Activated T-helper 1 cell treated with anti-CD3 and anti-CD28 coated beads, Interleukin-12 subunit alpha, Interleukin-12 subunit beta, Interleukin-2, Interleukin-4 antibody, amounts not matched to agents 30 ng/mL and 10 ng/mL and 1 ng/mL, durations not matched to agents 14 hours and 24 hours and 36 hours (primary cell): ENCODE measurements at regions of chr12 and their contacts with region 1.

Region 1: GRCh38 chr12:49763006-49763591 is 21.7 kb downstream of the TMBIM6 start:
- DNase-seq: peak; percentile 61
- H3K4me3 Mint-ChIP-seq: peak overlapping the region; percentile 61
- H3K27ac Mint-ChIP-seq: peak overlapping the region; percentile 75
- H3K4me1 Mint-ChIP-seq: peaks cover 49% of the 10 kb centered on the region
- H3K27me3 Mint-ChIP-seq: peaks cover 3% of the 10 kb centered on the region

Region 2: DNA sequence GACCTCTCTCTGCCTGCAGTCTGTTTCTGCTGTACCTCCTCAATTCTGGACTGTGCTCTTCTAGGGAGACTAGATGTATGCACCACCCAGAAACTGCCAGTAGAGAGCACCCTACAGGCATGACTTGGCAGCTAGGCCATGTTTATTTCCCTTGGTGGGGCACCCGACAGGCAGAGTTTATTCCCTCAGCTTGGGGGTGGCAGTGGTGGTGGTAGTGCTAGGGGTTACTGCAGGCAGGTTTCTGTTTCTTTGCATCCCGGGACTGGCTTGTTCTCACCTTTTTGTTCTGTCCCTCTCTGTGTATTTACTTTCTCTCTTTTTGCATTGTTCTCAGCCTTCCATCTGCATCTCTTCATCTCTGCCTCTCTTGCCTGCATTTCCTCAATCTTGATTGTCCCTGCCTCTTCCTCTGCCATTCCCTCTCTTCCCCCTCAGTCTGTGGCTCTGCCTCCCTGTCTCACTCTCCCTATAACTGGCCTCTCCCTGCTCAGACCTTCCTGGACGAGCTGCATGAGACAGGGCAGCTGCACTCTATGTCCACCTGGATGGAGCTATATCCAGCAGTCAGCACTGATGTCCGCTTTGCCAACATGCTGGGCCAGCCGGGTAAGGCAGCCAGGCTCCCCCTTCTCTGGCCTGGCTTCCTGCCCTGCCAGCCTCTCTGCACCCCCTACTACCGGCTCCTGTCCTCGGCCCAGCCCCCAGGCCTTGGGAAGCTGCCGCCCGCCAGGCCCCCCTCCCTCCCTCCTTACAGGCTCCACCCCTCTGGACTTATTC is 125.9 kb before region 1 on chr12:
- intact Hi-C with region 1: loop called (anchors 5 kb)
- DNase-seq: peak; percentile 54
- H3K4me3 Mint-ChIP-seq: no peak overlapping the region
- H3K27ac Mint-ChIP-seq: peak overlapping the region; percentile 24
- H3K4me1 Mint-ChIP-seq: peaks cover 11% of the 10 kb centered on the region
- H3K27me3 Mint-ChIP-seq: no peaks in the 10 kb centered on the region

Region 3: DNA sequence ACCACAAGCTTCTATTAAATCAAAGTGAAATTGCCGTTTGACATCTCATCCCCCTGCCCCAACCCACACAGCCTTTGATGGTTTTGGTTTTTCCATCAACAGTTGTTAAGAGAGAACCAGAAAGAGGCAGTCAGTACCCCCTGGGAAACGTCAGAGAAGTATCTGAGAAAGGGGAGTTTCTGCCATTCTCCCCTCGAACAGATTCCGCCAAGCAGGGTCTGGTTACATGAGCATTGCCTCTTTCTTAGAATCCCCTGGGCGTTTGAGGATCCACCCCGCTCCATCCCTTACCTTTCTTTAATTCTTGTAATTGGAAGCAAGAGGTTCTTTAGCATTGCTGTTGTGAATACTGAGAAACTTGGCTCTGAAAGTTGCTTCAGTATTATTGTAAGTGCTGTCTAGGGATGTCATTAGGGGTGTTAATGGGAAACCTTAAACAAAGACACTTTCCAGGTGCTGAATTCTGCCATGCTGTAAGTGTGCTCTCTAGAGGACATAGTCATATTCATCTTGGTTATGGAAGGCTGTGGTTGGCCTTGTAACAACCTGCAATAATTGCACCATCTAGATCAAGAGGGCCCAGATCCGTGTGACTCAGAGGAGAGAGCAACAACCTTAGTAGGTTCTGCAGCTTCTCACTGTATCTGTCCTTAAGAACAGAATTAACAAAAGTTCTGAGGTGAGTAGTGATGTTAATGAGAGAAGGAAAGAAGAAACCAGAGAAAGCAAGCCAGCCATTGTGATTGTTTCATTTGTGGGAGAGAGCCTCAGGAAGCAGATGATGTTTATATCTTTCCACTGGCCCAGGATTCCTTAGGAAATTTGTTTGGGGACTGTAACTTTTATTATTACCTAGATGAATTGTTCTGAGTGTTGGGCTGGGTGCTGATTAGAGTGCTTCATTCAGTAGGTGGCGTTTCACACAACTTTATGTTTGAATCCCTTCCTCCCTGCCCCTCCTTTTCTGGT is 12.8 kb before region 1 on chr12:
- intact Hi-C with region 1: loop called (anchors 1 kb)
- DNase-seq: peak; percentile 20
- H3K4me3 Mint-ChIP-seq: peak overlapping the region; percentile 40
- H3K27ac Mint-ChIP-seq: peak overlapping the region; percentile 85
- H3K4me1 Mint-ChIP-seq: peaks cover 64% of the 10 kb centered on the region
- H3K27me3 Mint-ChIP-seq: no peaks in the 10 kb centered on the region